GM23248 (cell line): ENCODE measurements at regions of chr6 and their contacts with region 1.

Region 1: DNA sequence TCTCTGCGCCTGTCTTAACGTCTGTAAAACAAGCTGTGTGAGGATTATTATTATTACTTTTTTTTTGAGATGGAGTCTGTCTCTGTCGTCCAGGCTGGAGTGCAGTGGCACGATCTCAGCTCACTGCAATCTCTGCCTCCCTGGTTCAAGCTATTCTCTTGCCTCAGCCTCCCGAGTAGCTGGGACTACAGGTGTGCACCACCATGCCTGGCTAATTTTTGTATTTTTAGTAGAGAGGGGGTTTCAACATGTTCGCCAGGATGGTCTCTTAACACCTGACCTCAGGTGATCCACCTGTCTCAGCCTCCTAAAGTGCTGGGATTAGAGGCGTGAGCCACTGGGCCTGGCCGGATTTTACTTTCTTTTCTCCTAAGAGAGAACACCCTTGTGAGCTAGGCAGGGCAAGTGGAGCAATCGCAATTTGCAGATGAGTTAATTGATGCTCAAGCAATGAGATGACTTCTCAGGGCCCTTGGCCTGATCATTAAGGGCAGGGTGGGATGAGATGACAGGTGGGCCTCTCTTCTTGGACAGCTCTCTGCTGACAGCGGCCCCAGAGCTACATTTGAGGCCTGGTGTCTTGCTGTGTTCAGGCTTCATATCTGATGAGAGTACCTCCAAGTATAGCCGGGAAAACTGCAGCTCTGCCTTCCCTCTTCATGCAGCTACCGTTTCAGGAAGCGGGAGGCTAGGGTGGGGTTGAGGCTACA is 901 bp upstream of the SMIM29 start:
- DNase-seq: no peak
- H3K4me3 ChIP-seq: peak overlapping the region; percentile 83
- H3K27ac ChIP-seq: peak overlapping the region; percentile 62
- H3K4me1 ChIP-seq: peaks cover 8% of the 10 kb centered on the region; the same call in 1 of the 2 replicates
- H3K27me3 ChIP-seq: no peaks in the 10 kb centered on the region

Region 2: GRCh38 chr6:34386316-34387137 is 136.8 kb after region 1 on chr6:
- in situ Hi-C with region 1: loop called (anchors 10 kb)
- DNase-seq: peak; percentile 93
- H3K4me3 ChIP-seq: no peak overlapping the region
- H3K27ac ChIP-seq: peak overlapping the region; percentile 39
- H3K4me1 ChIP-seq: peaks cover 23% of the 10 kb centered on the region
- H3K27me3 ChIP-seq: no peaks in the 10 kb centered on the region

Region 3: DNA sequence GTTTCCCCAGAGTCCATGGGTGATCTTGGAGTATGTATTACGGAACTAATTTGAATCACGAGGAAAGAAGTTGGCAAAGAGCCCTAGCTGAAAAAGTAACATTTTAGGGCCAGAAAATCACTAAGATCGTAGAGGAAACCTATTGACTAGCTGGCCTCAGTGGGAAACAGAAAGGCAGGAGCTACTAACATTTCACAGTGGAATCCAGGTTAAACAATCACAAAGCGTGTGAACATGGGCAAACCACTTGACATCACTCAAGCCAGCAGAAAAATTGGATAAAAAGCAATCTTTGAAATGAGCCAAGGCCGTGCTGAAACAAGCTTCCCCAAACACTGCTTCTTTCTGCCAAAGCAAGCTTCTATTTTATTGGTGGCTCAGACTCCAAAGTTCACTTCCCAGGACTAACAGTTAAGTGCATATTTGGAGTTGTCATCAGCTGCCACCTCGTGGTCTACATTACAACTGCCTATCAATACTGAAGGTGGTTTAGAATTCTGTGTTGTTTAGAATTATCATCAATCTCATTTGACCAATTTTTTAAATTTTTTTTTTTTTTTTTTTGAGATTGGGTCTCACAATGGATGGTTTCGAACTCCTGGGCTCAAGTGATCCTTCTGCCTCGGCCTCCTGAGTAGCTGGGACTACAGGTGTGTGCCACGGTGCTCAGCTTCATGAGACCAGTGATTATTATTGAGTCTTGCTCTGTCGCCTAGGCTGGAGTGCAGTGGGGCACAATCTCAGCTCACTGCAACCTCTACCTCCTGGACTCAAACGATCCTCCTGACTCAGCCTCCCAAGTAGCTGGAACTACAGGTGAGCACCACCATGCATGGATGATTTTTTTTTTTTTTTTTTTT is 165.5 kb after region 1 on chr6:
- in situ Hi-C with region 1: loop called (anchors 10 kb)
- DNase-seq: peak; percentile 79
- H3K4me3 ChIP-seq: no peak overlapping the region
- H3K27ac ChIP-seq: 0 out of 2 replicates have a peak overlapping the region, but pooled peaks have one; percentile 5
- H3K4me1 ChIP-seq: no peaks in the 10 kb centered on the region
- H3K27me3 ChIP-seq: no peaks in the 10 kb centered on the region

Region 4: GRCh38 chr6:35264550-35265274 is 1015.0 kb after region 1 on chr6:
- in situ Hi-C with region 1: no loop called
- DNase-seq: no peak
- H3K4me3 ChIP-seq: no peak overlapping the region
- H3K27ac ChIP-seq: no peak overlapping the region
- H3K4me1 ChIP-seq: peaks cover 14% of the 10 kb centered on the region
- H3K27me3 ChIP-seq: no peaks in the 10 kb centered on the region